ENCODE measurements at regions of chr6 and their contacts with region 1.

Region 1: DNA sequence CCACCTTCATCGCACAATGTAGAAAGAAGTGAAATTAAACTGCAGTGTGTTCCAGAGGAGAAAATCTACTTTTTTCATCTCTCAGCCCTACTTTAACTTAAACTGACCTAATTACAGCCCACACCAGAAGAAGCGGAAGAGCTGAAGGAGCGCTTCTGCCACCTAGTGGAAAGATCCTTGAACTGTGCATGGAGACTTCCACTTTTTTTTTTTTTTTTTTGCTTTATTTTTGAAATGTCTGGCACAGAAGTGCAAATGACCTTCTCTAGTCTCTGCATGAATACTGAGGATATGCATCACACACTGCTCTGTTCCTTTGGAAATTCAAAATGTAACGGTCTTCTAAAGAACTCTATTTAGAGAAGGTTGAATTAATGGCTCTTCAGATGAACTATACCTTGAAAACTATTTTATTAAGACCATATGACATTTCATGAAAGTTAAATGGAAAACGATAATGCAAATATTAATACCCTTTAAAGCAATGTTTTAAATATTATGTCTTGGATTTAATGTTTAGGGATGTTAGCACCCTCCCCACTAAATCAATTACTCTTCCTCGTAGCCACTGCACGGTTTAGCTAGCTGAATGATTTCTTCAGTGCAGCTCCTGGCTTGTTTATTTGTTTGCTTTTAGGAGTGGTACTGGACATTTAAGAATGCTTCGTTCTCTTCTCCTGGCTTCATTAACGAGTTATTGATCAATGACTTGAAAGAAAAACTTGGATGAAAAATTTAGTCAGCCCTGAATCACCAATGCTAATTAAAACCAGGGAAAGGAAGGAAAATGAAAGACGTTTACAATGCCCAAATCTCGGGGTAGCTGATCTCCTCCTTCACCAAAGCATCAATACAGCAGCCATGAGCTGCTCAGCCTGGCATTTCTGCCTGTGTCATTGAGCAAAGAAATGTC is 569.6 kb upstream of the GJE1 start:
- DNase-seq: peak; percentile 70
- ATAC-seq: peak; percentile 88
- H3K4me3 Mint-ChIP-seq: peak overlapping the region; percentile 56
- H3K27ac Mint-ChIP-seq: peak overlapping the region; percentile 83
- H3K4me1 Mint-ChIP-seq: peaks cover 11% of the 10 kb centered on the region
- H3K27me3 Mint-ChIP-seq: peaks cover 2% of the 10 kb centered on the region

Region 2: DNA sequence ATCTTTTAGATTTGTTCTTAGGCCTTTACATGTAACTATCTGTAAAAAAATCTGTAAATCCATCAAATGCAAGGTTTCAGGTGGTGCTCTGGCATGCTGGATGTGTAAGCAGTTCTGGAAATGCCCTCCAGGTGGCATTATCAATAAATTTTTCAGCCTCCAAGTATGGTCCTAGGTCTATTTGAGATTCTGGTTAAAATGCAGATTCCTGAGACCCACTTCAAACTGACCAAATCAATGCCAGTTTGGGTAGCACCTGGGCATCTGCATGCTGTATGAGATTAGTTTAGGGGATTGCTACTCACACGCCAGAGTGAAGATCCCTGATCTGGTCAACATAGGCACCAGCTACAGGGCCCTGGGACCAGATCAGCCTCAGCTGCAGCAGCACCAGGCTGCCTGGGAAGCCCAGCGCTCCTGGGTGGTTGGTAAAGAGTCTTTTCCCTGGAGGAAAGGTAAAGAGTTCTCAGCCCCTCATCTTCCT is 1681.3 kb before region 1 on chr6:
- CTCF ChIA-PET with region 1: no interaction called
- POLR2A ChIA-PET with region 1: no interaction called
- intact Hi-C with region 1: loop called in 1 of 2 experiments (anchors 2 kb)
- DNase-seq: peak; percentile 33
- ATAC-seq: peak; percentile 61
- H3K4me3 Mint-ChIP-seq: no peak overlapping the region
- H3K27ac Mint-ChIP-seq: no peak overlapping the region
- H3K4me1 Mint-ChIP-seq: peaks cover 2% of the 10 kb centered on the region
- H3K27me3 Mint-ChIP-seq: peaks cover 2% of the 10 kb centered on the region

Region 3: DNA sequence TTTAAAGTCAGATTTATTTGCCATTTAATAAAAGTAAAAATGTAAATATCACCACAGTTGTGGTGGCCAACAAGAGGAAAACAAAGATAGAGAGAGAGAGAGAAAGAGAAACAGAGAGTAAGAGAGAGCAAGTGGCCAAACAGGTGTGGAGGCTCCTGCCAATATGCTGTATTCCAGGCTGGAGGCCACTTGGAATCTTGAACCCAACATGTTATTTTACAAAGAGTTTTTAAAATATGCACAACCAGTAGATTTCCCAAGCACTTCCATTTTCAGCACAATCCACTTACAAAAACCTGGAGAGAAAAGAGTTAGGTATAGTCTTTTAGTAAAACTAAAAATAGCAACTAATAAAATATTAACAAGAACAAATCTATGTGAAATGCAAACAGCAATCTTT is 865.5 kb before region 1 on chr6:
- CTCF ChIA-PET with region 1: no interaction called
- POLR2A ChIA-PET with region 1: no interaction called
- intact Hi-C with region 1: no loop called
- DNase-seq: no peak
- ATAC-seq: no peak
- H3K4me3 Mint-ChIP-seq: no peak overlapping the region
- H3K27ac Mint-ChIP-seq: no peak overlapping the region
- H3K4me1 Mint-ChIP-seq: no peaks in the 10 kb centered on the region
- H3K27me3 Mint-ChIP-seq: no peaks in the 10 kb centered on the region

Region 4: GRCh38 chr6:140915103-140915502 is 648.0 kb before region 1 on chr6:
- CTCF ChIA-PET with region 1: no interaction called
- POLR2A ChIA-PET with region 1: no interaction called
- intact Hi-C with region 1: loop called in 1 of 2 experiments (anchors 10 kb)
- DNase-seq: no peak
- ATAC-seq: no peak
- H3K4me3 Mint-ChIP-seq: no peak overlapping the region
- H3K27ac Mint-ChIP-seq: no peak overlapping the region
- H3K4me1 Mint-ChIP-seq: no peaks in the 10 kb centered on the region
- H3K27me3 Mint-ChIP-seq: no peaks in the 10 kb centered on the region

Region 5: GRCh38 chr6:141105481-141105880 is 457.6 kb before region 1 on chr6:
- CTCF ChIA-PET with region 1: no interaction called
- POLR2A ChIA-PET with region 1: no interaction called
- intact Hi-C with region 1: loop called in 1 of 2 experiments (anchors 10 kb)
- DNase-seq: no peak
- ATAC-seq: no peak
- H3K4me3 Mint-ChIP-seq: no peak overlapping the region
- H3K27ac Mint-ChIP-seq: no peak overlapping the region
- H3K4me1 Mint-ChIP-seq: peaks cover 2% of the 10 kb centered on the region
- H3K27me3 Mint-ChIP-seq: peaks cover 6% of the 10 kb centered on the region

Region 6: DNA sequence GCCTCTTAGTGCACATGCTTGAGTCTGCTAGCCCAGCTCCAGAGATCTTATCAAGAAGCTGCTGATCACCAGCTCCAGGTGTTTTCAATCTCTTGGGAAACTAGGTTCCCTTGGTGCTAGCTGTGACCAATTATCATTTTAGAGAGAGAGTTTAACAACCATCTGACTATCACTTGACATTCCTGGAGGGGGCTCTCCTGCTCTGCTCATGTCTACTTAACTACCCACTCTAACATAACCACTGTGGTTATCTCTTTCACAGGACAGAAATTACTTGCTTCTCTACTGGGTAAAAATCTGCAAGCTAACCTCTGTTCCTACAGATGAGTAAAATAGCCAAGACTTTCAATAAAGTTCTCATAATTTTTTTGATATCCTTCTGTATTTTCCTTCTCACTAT is 253.8 kb before region 1 on chr6:
- CTCF ChIA-PET with region 1: interaction called, 3 read pairs
- POLR2A ChIA-PET with region 1: no interaction called
- intact Hi-C with region 1: loop called (anchors 1 to 2 kb)
- DNase-seq: peak; percentile 13
- ATAC-seq: peak; percentile 65
- H3K4me3 Mint-ChIP-seq: no peak overlapping the region
- H3K27ac Mint-ChIP-seq: no peak overlapping the region
- H3K4me1 Mint-ChIP-seq: peaks cover 9% of the 10 kb centered on the region
- H3K27me3 Mint-ChIP-seq: peaks cover 4% of the 10 kb centered on the region

Region 7: GRCh38 chr6:141326426-141326825 is 236.7 kb before region 1 on chr6:
- CTCF ChIA-PET with region 1: no interaction called
- POLR2A ChIA-PET with region 1: no interaction called
- intact Hi-C with region 1: loop called (anchors 5 kb)
- DNase-seq: peak; percentile 73
- ATAC-seq: peak; percentile 100
- H3K4me3 Mint-ChIP-seq: no peak overlapping the region
- H3K27ac Mint-ChIP-seq: no peak overlapping the region
- H3K4me1 Mint-ChIP-seq: peaks cover 19% of the 10 kb centered on the region
- H3K27me3 Mint-ChIP-seq: peaks cover 3% of the 10 kb centered on the region

Region 8: GRCh38 chr6:141403795-141404194 is 159.3 kb before region 1 on chr6:
- CTCF ChIA-PET with region 1: no interaction called
- POLR2A ChIA-PET with region 1: no interaction called
- intact Hi-C with region 1: no loop called
- DNase-seq: no peak
- ATAC-seq: no peak
- H3K4me3 Mint-ChIP-seq: no peak overlapping the region
- H3K27ac Mint-ChIP-seq: no peak overlapping the region
- H3K4me1 Mint-ChIP-seq: peaks cover 5% of the 10 kb centered on the region
- H3K27me3 Mint-ChIP-seq: no peaks in the 10 kb centered on the region

Region 9: GRCh38 chr6:141483598-141484061 is 79.5 kb before region 1 on chr6:
- CTCF ChIA-PET with region 1: interaction called, 3 read pairs
- POLR2A ChIA-PET with region 1: no interaction called
- intact Hi-C with region 1: loop called in 1 of 2 experiments (anchors 5 kb)
- DNase-seq: peak; percentile 69
- ATAC-seq: peak; percentile 97
- H3K4me3 Mint-ChIP-seq: peak overlapping the region; percentile 66
- H3K27ac Mint-ChIP-seq: peak overlapping the region; percentile 93
- H3K4me1 Mint-ChIP-seq: peaks cover 34% of the 10 kb centered on the region
- H3K27me3 Mint-ChIP-seq: no peaks in the 10 kb centered on the region

Region 10: DNA sequence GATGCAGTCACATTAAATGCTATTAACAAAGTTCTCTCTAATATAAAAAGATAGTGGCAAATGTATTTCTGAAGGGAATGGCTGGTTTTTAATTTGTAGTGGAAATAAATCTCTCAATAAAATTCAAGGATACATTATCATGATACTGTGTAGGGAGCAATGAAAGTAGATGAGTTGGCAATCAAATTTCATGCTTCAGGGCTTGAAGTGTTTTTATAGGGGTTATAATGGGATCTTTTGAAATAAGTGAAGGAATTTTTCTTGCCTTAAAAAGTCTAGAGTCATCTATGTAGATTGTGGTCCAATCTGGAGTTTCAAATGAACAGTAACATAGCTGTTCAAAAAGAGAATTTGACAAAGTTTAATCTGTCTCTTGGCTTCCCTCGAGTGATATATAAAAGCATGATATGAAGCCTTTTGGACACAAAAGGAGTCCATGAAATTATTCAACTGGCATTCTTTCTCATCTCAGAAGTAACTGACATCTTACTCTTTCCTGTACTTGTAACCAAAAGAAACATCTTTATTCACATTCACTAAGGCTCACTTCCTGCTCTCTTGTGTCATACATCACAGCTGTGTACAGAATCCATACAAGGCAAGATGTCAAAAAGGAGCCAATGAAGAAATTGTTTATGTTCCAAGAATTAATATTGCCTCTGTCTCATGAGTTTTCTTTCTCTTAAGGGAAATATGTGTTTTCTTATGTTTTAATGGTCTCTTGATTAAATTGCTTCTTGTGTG is 21.4 kb before region 1 on chr6:
- CTCF ChIA-PET with region 1: no interaction called
- POLR2A ChIA-PET with region 1: no interaction called
- intact Hi-C with region 1: no loop called
- DNase-seq: no peak
- ATAC-seq: peak; percentile 53
- H3K4me3 Mint-ChIP-seq: no peak overlapping the region
- H3K27ac Mint-ChIP-seq: no peak overlapping the region
- H3K4me1 Mint-ChIP-seq: no peaks in the 10 kb centered on the region
- H3K27me3 Mint-ChIP-seq: peaks cover 2% of the 10 kb centered on the region

Measured in activated CD4-positive, alpha-beta T cell treated with anti-CD3 and anti-CD28 coated beads for 36 hours (primary cell).